Naive thymus-derived CD4-positive, alpha-beta T cell (primary cell): ENCODE measurements at regions of chr5 and their contacts with region 1.

Region 1: DNA sequence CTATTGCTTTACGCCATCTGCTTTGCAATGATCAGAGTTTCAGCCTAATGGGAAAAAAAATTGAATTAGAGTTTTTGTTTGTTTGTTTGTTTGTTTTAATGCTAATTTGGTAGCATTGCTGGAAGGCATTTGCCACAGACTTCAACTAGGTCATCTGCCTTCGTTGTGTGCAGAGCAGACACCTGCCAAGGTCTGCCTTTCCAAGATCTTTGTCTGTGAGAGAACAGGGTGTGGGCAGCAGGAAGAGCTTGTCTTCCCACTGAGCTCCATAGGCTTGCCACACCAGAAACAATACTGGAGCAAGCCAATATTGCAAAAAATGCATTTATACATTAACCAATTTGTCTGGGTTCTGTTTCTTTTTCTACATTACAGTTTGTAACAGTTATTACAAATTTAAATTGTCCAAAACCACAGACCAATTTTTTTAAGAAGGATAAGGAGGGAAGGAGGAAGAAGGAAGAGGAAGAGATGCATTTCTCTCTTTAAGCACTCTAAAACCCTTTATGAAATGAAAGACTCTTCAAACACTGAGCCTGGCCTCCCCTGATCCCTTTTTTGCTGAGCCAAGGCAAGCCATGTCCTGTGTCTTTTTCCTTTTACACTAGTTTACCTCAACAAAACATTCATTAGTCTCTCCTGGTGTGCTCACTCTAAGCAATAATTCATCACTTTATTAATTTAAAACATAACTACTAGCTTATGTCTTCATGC is 210.5 kb downstream of the SNX18 start:
- DNase-seq: no peak
- ATAC-seq: no peak
- H3K4me3 ChIP-seq: no peak overlapping the region
- H3K4me3 Mint-ChIP-seq: no peak overlapping the region
- H3K27ac ChIP-seq: no peak overlapping the region
- H3K27ac Mint-ChIP-seq: no peak overlapping the region
- H3K4me1 ChIP-seq: no peaks in the 10 kb centered on the region
- H3K4me1 Mint-ChIP-seq: peaks cover 0 to 7% (median 0%) of the 10 kb centered on the region in 7 donors
- H3K27me3 ChIP-seq: no peaks in the 10 kb centered on the region
- H3K27me3 Mint-ChIP-seq: peaks cover 0 to 25% (median 0%) of the 10 kb centered on the region in 5 donors

Region 2: DNA sequence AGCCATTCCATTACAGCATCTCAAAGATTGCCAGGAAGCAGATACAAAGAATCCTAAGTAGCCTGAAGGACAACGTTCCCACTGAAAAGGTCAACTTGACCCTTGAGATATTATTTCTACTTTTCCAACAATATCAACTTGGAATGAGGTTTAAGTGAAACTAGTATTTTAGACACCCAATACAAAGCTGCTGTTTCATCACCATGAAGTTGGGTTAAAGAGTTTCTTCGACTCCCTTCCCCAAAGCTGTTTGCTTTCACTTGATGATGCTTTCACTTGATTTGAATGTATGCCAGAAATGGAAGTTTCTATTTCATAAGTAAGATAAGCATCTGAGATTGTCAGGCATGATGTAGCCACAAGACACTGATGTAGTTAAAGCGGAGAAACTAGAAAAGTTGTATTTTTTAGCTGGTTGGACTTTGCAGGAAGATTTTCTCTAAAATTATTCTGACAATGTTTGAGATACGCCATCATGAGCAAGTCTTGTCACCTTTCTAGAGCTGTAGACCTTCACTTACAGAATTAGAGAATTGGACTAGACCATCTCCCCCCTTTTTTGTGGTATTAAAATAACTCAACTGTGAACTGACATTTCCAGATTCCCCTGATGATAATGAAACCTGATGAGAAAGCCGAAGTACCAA is 1638.6 kb before region 1 on chr5:
- CTCF ChIA-PET with region 1: no interaction called
- POLR2A ChIA-PET with region 1: no interaction called
- intact Hi-C with region 1: no loop called
- DNase-seq: peak in 6 of 9 donors; percentile 29 to 60 (median 40)
- ATAC-seq: peak; percentile 65
- H3K4me3 ChIP-seq: no peak overlapping the region
- H3K4me3 Mint-ChIP-seq: peak overlapping the region in 7 of 10 donors; percentile 32 to 71 (median 47)
- H3K27ac ChIP-seq: no peak overlapping the region
- H3K27ac Mint-ChIP-seq: peak overlapping the region in 5 of 9 donors; percentile 25 to 76 (median 40)
- H3K4me1 ChIP-seq: peaks cover 0 to 16% of the 10 kb centered on the region in 2 donors
- H3K4me1 Mint-ChIP-seq: peaks cover 11 to 61% (median 19%) of the 10 kb centered on the region in 7 donors
- H3K27me3 ChIP-seq: no peaks in the 10 kb centered on the region
- H3K27me3 Mint-ChIP-seq: peaks cover 0 to 2% (median 0%) of the 10 kb centered on the region in 5 donors

Region 3: GRCh38 chr5:54761213-54761701 is 33.2 kb after region 1 on chr5:
- CTCF ChIA-PET with region 1: no interaction called
- POLR2A ChIA-PET with region 1: no interaction called
- intact Hi-C with region 1: loop called in 1 of 2 experiments (anchors 2 kb)
- DNase-seq: no peak
- ATAC-seq: no peak
- H3K4me3 ChIP-seq: no peak overlapping the region
- H3K4me3 Mint-ChIP-seq: no peak overlapping the region
- H3K27ac ChIP-seq: no peak overlapping the region
- H3K27ac Mint-ChIP-seq: no peak overlapping the region
- H3K4me1 ChIP-seq: peaks cover 7 to 8% of the 10 kb centered on the region in 2 donors
- H3K4me1 Mint-ChIP-seq: peaks cover 9 to 26% (median 10%) of the 10 kb centered on the region in 7 donors
- H3K27me3 ChIP-seq: no peaks in the 10 kb centered on the region
- H3K27me3 Mint-ChIP-seq: peaks cover 0 to 8% (median 0%) of the 10 kb centered on the region in 5 donors

Region 4: GRCh38 chr5:54778783-54779182 is 50.8 kb after region 1 on chr5:
- CTCF ChIA-PET with region 1: no interaction called
- POLR2A ChIA-PET with region 1: no interaction called
- intact Hi-C with region 1: no loop called
- DNase-seq: no peak
- ATAC-seq: no peak
- H3K4me3 ChIP-seq: no peak overlapping the region
- H3K4me3 Mint-ChIP-seq: no peak overlapping the region
- H3K27ac ChIP-seq: no peak overlapping the region
- H3K27ac Mint-ChIP-seq: no peak overlapping the region
- H3K4me1 ChIP-seq: no peaks in the 10 kb centered on the region
- H3K4me1 Mint-ChIP-seq: peaks cover 0 to 9% (median 0%) of the 10 kb centered on the region in 7 donors
- H3K27me3 ChIP-seq: no peaks in the 10 kb centered on the region
- H3K27me3 Mint-ChIP-seq: peaks cover 0 to 63% (median 18%) of the 10 kb centered on the region in 5 donors